CD8-positive, alpha-beta T cell (primary cell): ENCODE measurements at regions of chr9 and their contacts with region 1.

Region 1: GRCh38 chr9:126704873-126705766 is 91.4 kb downstream of the LMX1B start:
- DNase-seq: peak; percentile 71 to 93 (median 86)
- ATAC-seq: peak; percentile 86
- H3K4me3 ChIP-seq: peak overlapping the region; percentile 7 to 35
- H3K4me3 Mint-ChIP-seq: peak overlapping the region; percentile 44
- H3K27ac ChIP-seq: no peak overlapping the region
- H3K27ac Mint-ChIP-seq: no peak overlapping the region
- H3K4me1 ChIP-seq: peaks cover 13% of the 10 kb centered on the region
- H3K4me1 Mint-ChIP-seq: peaks cover 19% of the 10 kb centered on the region
- H3K27me3 ChIP-seq: peaks cover 8% of the 10 kb centered on the region in 2 experiments
- H3K27me3 Mint-ChIP-seq: peaks cover 30% of the 10 kb centered on the region
- CTCF ChIP-seq: peak; percentile 90

Region 2: GRCh38 chr9:126690431-126691350 is 14.4 kb before region 1 on chr9:
- CTCF ChIA-PET with region 1: interaction called, 14 read pairs
- POLR2A ChIA-PET with region 1: no interaction called
- intact Hi-C with region 1: no loop called
- DNase-seq: peak; percentile 31 to 67 (median 54)
- ATAC-seq: peak; percentile 69
- H3K4me3 ChIP-seq: no peak overlapping the region
- H3K4me3 Mint-ChIP-seq: no peak overlapping the region
- H3K27ac ChIP-seq: no peak overlapping the region
- H3K27ac Mint-ChIP-seq: no peak overlapping the region
- H3K4me1 ChIP-seq: no peaks in the 10 kb centered on the region
- H3K4me1 Mint-ChIP-seq: no peaks in the 10 kb centered on the region
- H3K27me3 ChIP-seq: peaks cover 6 to 10% of the 10 kb centered on the region in 2 experiments
- H3K27me3 Mint-ChIP-seq: peaks cover 37% of the 10 kb centered on the region
- CTCF ChIP-seq: peak; percentile 63

Region 3: GRCh38 chr9:126722252-126723078 is 17.3 kb after region 1 on chr9:
- CTCF ChIA-PET with region 1: interaction called, 51 read pairs
- POLR2A ChIA-PET with region 1: interaction called, 19 read pairs
- intact Hi-C with region 1: loop called in 1 of 2 experiments (anchors 1 kb)
- DNase-seq: peak; percentile 66 to 94 (median 90)
- ATAC-seq: peak; percentile 66
- H3K4me3 ChIP-seq: peak overlapping the region; percentile 65 to 92
- H3K4me3 Mint-ChIP-seq: peak overlapping the region; percentile 90
- H3K27ac ChIP-seq: peak overlapping the region; percentile 87 to 99
- H3K27ac Mint-ChIP-seq: peak overlapping the region; percentile 95
- H3K4me1 ChIP-seq: peaks cover 44% of the 10 kb centered on the region
- H3K4me1 Mint-ChIP-seq: peaks cover 53% of the 10 kb centered on the region
- H3K27me3 ChIP-seq: no peaks in the 10 kb centered on the region
- H3K27me3 Mint-ChIP-seq: no peaks in the 10 kb centered on the region
- CTCF ChIP-seq: no peak

Region 4: DNA sequence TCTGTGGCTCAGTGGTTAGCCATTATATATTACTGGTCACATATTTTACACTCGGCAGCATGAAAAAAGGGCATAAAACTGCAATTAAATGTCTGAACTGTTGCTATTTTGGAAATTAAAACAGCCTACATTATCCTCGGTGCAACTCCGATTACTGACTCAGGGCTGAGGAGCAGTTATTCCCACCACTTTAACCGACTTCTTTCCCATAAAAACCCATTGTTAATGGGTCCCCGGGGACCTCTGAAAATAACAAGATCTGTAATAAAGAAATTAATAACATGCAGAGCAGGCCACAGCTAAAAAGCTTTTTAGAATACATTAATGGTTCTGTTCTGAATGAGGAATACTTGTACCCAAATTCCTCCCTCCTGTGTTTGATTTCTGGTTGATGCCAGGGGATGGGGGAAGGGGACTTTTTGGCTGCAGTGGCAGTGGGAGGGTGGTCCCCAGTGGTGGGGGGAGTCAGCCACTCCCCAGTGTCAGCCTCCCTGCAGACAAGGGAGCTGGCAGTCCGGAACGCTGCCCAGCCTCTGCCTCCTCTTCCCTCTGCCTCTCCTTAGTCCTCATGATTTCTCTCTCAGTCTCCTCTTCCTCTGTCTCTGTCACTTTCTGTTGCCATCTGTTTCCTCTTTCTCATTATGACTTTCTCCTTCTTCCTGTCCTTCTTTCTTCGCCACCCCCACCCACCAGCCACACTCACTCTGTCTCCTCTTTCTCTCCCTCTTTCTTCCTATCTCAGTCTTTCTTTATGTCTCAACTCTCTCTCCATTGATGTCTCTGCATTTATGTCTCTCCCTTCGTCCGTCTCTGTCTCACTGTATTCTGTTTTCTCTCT is 40.7 kb after region 1 on chr9:
- CTCF ChIA-PET with region 1: interaction called, 41 read pairs
- POLR2A ChIA-PET with region 1: no interaction called
- intact Hi-C with region 1: loop called in 1 of 2 experiments (anchors 5 kb)
- DNase-seq: no peak
- ATAC-seq: no peak
- H3K4me3 ChIP-seq: no peak overlapping the region
- H3K4me3 Mint-ChIP-seq: no peak overlapping the region
- H3K27ac ChIP-seq: no peak overlapping the region
- H3K27ac Mint-ChIP-seq: peak overlapping the region; percentile 49
- H3K4me1 ChIP-seq: peaks cover 2% of the 10 kb centered on the region
- H3K4me1 Mint-ChIP-seq: peaks cover 24% of the 10 kb centered on the region
- H3K27me3 ChIP-seq: no peaks in the 10 kb centered on the region
- H3K27me3 Mint-ChIP-seq: no peaks in the 10 kb centered on the region
- CTCF ChIP-seq: no peak

Region 5: DNA sequence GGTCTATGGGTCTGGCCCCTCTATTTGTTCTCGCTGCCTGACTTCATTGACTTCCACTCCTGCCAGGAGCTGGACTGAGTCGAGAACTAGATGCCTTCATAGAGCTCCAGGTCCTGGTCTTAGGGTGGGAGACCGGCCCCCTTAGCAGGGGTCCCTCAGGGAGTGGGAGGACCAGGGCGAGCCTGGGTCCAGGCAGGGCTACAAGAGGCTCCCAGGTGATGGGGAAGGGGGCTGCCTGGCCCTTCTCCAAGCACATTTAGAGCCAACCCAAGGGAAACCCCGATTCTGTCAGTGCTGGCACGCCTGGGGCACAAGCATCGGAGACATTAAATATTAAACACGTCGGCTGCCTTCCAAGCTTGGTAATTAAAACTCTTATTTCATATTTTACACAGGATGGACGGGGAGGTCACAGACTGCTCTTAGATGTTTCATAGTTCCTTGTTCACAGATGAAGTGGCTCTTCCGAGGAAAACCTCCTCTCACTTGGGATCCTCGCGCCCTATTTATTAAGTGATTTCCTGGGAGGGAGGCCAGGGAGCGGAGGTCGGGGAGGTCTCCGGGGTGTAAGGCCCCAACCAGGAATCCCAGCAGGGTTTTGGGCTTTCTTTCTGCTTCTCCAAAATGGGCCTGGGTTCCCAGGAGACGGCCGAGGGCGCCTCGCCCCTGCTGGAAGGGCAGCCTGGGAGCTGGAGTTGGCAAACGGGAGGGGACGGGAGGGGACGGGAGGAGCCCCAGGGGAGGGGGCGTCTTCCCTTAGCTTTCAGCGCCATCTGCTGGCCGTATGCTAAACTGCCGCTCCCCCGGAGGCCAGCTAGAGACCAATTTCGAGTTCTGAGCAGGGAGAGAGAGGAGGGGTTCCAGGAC is 76.3 kb after region 1 on chr9:
- CTCF ChIA-PET with region 1: interaction called, 660 read pairs
- POLR2A ChIA-PET with region 1: interaction called, 18 read pairs
- intact Hi-C with region 1: loop called (anchors 1 kb)
- DNase-seq: peak; percentile 71 to 90 (median 82)
- ATAC-seq: peak; percentile 92
- H3K4me3 ChIP-seq: no peak overlapping the region
- H3K4me3 Mint-ChIP-seq: no peak overlapping the region
- H3K27ac ChIP-seq: no peak overlapping the region
- H3K27ac Mint-ChIP-seq: no peak overlapping the region
- H3K4me1 ChIP-seq: no peaks in the 10 kb centered on the region
- H3K4me1 Mint-ChIP-seq: no peaks in the 10 kb centered on the region
- H3K27me3 ChIP-seq: peaks cover 0 to 4% of the 10 kb centered on the region in 2 experiments
- H3K27me3 Mint-ChIP-seq: peaks cover 29% of the 10 kb centered on the region
- CTCF ChIP-seq: peak; percentile 91

Region 6: GRCh38 chr9:126804696-126805545 is 99.8 kb after region 1 on chr9 and contains the start of gene ZBTB43:
- CTCF ChIA-PET with region 1: interaction called, 13 read pairs
- POLR2A ChIA-PET with region 1: interaction called, 4 read pairs
- intact Hi-C with region 1: no loop called
- DNase-seq: peak; percentile 97 to 99 (median 99)
- ATAC-seq: peak; percentile 82
- H3K4me3 ChIP-seq: peak within 1 kb of the TSS; percentile 83 to 85
- H3K4me3 Mint-ChIP-seq: peak within 1 kb of the TSS; percentile 98
- H3K27ac ChIP-seq: peak within 1 kb of the TSS; percentile 87 to 93
- H3K27ac Mint-ChIP-seq: peak within 1 kb of the TSS; percentile 99
- H3K4me1 ChIP-seq: peaks cover 32% of the 10 kb centered on the region
- H3K4me1 Mint-ChIP-seq: peaks cover 43% of the 10 kb centered on the region
- H3K27me3 ChIP-seq: no peaks in the 10 kb centered on the region
- H3K27me3 Mint-ChIP-seq: no peaks in the 10 kb centered on the region
- CTCF ChIP-seq: no peak
- total RNA-seq, gene ZBTB43: 55.7 to 65.0 TPM

Region 7: GRCh38 chr9:127214421-127215267 is 509.5 kb after region 1 on chr9:
- CTCF ChIA-PET with region 1: no interaction called
- POLR2A ChIA-PET with region 1: no interaction called
- intact Hi-C with region 1: no loop called
- DNase-seq: peak; percentile 36 to 73 (median 64)
- ATAC-seq: peak; percentile 93
- H3K4me3 ChIP-seq: no peak overlapping the region
- H3K4me3 Mint-ChIP-seq: no peak overlapping the region
- H3K27ac ChIP-seq: no peak overlapping the region
- H3K27ac Mint-ChIP-seq: no peak overlapping the region
- H3K4me1 ChIP-seq: no peaks in the 10 kb centered on the region
- H3K4me1 Mint-ChIP-seq: peaks cover 3% of the 10 kb centered on the region
- H3K27me3 ChIP-seq: no peaks in the 10 kb centered on the region
- H3K27me3 Mint-ChIP-seq: peaks cover 8% of the 10 kb centered on the region
- CTCF ChIP-seq: peak; percentile 69